ENCODE measurements at regions of chr4 and their contacts with region 1.

Region 1: DNA sequence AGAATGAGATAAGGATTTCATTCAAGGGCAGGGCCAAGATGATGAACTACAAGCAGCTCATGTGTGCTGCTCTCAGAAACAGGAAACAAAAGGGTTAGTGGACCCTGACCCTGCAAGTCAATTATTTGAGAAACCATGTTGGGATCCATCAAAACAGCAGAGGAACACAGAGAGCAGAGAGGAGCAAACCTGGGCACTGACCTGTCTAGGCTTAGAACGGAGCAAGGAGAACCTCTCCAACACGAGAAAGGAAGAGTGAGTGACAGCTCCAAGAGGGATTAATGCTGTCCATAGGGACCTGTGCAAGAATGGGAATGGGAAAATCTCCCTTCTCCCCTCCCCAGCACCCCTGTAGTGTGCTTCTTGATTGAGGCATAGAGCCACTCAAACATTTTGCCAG is 53.9 kb upstream of the UGT2B4 start:
- DNase-seq: no peak
- H3K4me3 ChIP-seq: no peak overlapping the region
- H3K27ac ChIP-seq: no peak overlapping the region
- H3K4me1 ChIP-seq: no peaks in the 10 kb centered on the region
- H3K27me3 ChIP-seq: no peaks in the 10 kb centered on the region
- CTCF ChIP-seq: no peak
- POLR2A ChIP-seq: no peak

Region 2: GRCh38 chr4:68426516-68426915 is 1123.1 kb before region 1 on chr4:
- intact Hi-C with region 1: loop called (anchors 5 kb)
- DNase-seq: no peak
- H3K4me3 ChIP-seq: no peak overlapping the region
- H3K27ac ChIP-seq: no peak overlapping the region
- H3K4me1 ChIP-seq: no peaks in the 10 kb centered on the region
- H3K27me3 ChIP-seq: no peaks in the 10 kb centered on the region
- CTCF ChIP-seq: no peak
- POLR2A ChIP-seq: no peak

Region 3: GRCh38 chr4:69589884-69590283 is 40.2 kb after region 1 on chr4:
- intact Hi-C with region 1: loop called (anchors 2 kb)
- DNase-seq: no peak
- H3K4me3 ChIP-seq: no peak overlapping the region
- H3K27ac ChIP-seq: no peak overlapping the region
- H3K4me1 ChIP-seq: no peaks in the 10 kb centered on the region
- H3K27me3 ChIP-seq: no peaks in the 10 kb centered on the region
- CTCF ChIP-seq: no peak
- POLR2A ChIP-seq: no peak

Measured in breast epithelium (tissue), 4 donors.